Tibial artery (tissue), 4 donors: ENCODE measurements at regions of chr10 and their contacts with region 1.

Region 1: DNA sequence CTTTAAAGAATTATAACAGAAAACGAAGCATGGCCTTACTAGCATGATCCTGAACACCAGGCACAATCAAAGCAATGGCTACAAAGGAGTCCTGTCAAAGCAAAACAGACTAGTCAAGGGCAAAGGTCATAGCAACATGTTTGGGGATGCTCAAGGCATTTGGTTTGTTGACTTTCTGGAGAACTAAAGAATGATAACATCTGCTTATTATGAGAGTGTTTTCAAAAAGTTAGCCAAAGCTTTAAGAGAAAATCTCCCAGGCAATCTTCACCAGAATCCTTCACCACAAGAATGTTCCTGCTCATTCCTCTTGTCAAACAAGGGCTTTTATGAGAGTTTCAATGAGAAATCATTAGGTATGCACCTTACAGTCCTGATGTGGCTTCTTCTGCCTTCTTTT is 95.1 kb upstream of the CPXM2 start:
- DNase-seq: no peak
- H3K4me3 ChIP-seq: no peak overlapping the region
- H3K27ac ChIP-seq: no peak overlapping the region
- H3K4me1 ChIP-seq: peaks cover 0 to 4% (median 3%) of the 10 kb centered on the region in 4 donors
- H3K27me3 ChIP-seq: peaks cover 0 to 19% of the 10 kb centered on the region in 2 donors
- CTCF ChIP-seq: no peak

Region 2: DNA sequence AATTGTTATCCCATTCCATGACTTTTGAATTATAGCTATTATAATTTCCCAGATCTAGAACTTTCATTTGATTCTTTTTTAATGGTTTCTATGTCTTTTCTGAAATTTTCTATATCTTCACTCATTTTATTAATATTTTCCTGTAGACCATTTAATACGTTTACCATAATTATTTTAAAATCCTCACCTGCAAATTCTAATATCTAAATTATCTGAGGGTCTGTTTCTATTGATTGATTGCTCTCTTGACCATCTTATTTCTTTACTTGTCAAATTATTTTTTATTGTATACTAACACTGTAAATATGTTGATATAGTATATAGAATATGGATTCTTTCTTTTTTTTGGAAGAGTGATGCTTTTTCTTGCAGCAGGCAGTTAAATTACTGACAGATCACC is 1402.9 kb after region 1 on chr10:
- intact Hi-C with region 1: loop called (anchors 5 kb)
- DNase-seq: no peak
- H3K4me3 ChIP-seq: no peak overlapping the region
- H3K27ac ChIP-seq: no peak overlapping the region
- H3K4me1 ChIP-seq: no peaks in the 10 kb centered on the region
- H3K27me3 ChIP-seq: peaks cover 0 to 8% of the 10 kb centered on the region in 2 donors
- CTCF ChIP-seq: no peak